Dendritic cell treated with granulocyte-macrophage colony-stimulating factor and Interleukin-4, amounts not matched to agents 40 ng/mL and 50 ng/mL, for 4 days (primary cell): ENCODE measurements at regions of chr3 and their contacts with region 1.

Region 1: GRCh38 chr3:138137861-138138260 is 5.7 kb upstream of the A4GNT start:
- H3K4me3 Mint-ChIP-seq: no peak overlapping the region
- H3K27ac Mint-ChIP-seq: peak overlapping the region; percentile 83
- H3K4me1 Mint-ChIP-seq: peaks cover 78% of the 10 kb centered on the region
- H3K27me3 Mint-ChIP-seq: no peaks in the 10 kb centered on the region

Region 2: DNA sequence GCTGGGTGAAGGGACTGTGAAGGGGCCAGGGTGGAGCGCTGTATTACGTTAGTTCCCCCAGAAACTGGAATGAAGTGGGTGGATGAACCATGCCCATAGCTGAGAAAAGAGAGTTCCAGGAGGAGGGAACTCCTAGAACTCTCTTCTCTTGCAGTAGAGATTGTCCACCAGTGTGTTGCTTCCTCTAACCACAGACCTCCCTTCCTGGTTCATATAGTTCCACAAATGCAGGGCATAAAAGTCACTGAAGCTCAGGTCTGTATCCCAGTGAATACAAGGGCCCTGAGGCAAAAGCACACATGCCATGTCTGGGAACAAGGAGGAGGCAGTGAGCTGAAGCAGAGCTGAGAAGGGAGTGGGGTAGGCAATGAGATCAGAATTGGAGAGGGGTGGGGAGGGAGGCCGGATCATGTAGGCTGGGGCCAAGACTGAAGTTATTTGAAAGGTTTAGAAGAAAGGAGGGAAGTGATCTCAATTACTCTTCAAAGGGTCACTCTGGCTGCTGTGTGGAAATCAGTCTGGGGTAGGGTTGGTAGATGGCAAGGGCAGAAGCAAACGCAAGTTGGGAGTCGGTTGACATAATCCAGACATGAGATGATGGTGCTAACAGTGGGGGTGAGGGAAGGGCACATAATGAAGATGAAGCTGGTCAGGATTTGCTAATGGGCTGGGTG is 12.2 kb before region 1 on chr3:
- intact Hi-C with region 1: loop called (anchors 2 kb)
- H3K4me3 Mint-ChIP-seq: peak overlapping the region; percentile 67
- H3K27ac Mint-ChIP-seq: peak overlapping the region; percentile 91
- H3K4me1 Mint-ChIP-seq: peaks cover 56% of the 10 kb centered on the region
- H3K27me3 Mint-ChIP-seq: no peaks in the 10 kb centered on the region